HEK293 (cell line): ENCODE measurements at regions of chr12 and their contacts with region 1.

Region 1: DNA sequence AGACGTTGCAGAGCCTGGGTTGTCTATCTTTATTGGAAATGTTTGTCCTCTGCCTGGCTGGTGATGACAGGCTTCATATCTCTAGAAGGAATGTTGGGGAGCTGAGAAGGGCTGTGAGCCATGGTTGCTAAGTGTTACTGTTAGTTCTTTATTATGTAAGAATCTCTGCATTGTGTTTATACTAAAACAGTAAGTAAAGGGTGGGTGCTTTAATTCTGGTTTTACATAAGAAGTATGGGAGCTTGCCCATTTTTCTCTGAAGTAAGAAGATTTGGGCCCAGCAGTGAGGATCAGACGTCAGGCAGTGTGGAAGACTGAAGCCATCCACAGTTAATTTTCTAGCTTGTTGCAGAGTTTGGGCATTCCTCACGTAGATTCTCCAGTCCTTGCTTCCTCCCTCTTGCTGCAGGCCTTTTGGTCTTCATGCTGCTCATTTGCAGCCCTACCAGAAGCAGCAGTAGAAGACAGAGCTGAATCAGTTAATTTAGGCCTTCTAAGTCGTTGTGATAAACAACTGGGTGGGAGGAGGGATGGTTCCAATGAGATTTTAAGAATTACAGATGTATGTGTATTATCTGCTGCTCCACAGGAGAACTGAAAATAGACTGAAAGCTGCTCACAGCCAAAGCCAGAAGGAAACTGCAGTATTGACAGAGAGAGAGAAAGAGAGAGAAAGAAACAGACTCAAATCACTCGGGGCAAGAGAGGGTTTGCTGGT is 21.4 kb downstream of the WNT5B start:
- H3K4me3 ChIP-seq: no peak overlapping the region
- H3K27ac ChIP-seq: no peak overlapping the region
- H3K4me1 ChIP-seq: no peaks in the 10 kb centered on the region
- CTCF ChIP-seq: no peak

Region 2: GRCh38 chr12:1690578-1691122 is 40.2 kb after region 1 on chr12 and contains the start of gene ADIPOR2:
- CTCF ChIA-PET with region 1: interaction called, 7 read pairs
- POLR2A ChIA-PET with region 1: interaction called, 17 read pairs
- H3K4me3 ChIP-seq: peak within 1 kb of the TSS; percentile 71
- H3K27ac ChIP-seq: peak within 1 kb of the TSS; percentile 94
- H3K4me1 ChIP-seq: peaks cover 11% of the 10 kb centered on the region
- CTCF ChIP-seq: no peak

Region 3: DNA sequence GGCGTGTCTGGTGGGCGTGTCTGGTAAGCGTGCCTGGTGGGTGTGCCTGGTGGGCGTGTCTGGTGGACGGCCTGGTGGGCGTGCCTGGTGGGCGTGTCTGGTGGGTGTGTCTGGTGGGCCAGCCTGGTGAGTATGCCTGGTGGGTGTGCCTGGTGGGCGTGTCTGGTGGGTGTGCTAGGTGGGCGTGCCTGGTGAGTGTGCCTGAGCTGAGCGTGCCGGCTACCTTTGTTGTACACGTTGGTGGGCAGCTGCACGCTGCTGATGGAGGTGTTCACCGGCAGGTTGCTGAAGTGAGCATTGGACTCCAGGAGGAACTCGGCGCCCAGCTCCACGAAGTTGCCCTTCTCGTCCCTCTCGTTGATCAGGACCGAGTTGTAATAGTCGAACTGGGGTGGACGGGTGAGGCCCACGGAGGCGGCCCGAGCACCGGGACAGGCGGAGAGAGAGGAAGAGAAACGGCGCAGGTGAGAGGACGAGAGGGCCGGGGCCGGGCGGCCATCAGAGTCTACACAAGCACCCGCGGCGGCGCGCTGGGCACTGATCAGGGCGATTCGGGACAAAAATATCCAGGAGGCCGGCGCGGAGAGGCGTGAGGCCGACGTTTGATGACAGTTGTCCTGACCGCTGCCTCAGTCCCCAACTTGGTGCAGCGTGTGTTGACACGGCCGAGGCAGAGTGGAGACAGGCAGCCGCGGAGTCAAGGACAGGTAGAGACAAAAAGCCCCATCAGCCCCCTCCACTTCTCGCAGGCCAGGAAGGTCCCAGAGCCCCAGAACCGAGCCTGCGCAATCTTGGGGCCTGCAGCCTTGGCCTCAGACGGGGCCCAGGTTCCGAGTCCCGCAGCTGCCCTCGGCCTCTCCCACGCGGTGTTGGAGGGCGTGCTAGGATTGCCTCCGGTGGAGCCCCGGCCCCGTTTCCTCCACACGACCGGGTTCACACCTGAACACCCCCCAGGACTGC is 257.5 kb after region 1 on chr12:
- CTCF ChIA-PET with region 1: no interaction called
- POLR2A ChIA-PET with region 1: no interaction called
- H3K4me3 ChIP-seq: no peak overlapping the region
- H3K27ac ChIP-seq: no peak overlapping the region
- H3K4me1 ChIP-seq: no peaks in the 10 kb centered on the region
- CTCF ChIP-seq: no peak